ENCODE measurements at regions of chr4 and their contacts with region 1.

Region 1: DNA sequence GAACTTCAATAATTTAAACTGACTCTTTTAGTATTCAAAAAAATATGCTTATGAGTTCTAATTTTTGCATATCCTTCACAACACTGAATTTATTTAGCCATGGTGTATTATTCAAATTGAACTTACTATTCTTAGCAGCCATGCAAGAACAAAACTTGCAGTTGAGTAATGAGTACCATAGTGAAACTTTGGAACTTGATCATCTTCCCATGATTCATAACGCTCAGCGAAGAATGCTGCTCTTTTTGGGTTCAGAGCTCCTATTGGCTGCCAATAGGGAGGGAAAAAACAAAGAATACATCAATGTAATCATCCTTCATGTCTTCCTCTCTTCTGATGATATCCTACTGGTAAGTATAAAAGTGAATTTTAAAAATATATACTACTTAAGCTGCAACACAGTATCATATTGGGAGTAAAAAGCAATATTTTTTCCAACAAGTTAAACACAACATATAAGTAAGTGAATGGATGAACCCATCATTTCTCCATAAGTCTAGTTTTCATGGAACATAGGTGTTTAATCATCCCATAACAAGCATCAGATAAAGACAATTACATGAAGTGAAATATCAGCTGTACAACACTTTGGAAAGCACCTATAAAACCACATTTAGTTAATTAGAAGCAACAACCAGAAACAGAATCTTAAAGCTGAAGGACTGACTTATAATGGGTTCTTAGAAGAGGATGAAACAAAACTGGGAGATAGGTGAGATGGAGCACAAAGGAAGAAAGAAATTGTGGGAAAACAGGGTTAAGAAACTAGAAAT is 145.2 kb upstream of the MAB21L2 start:
- DNase-seq: peak; percentile 42
- ATAC-seq: peak; percentile 98
- H3K4me3 Mint-ChIP-seq: peak overlapping the region; percentile 16
- H3K27ac Mint-ChIP-seq: peak overlapping the region; percentile 59
- H3K4me1 Mint-ChIP-seq: peaks cover 16% of the 10 kb centered on the region
- H3K27me3 Mint-ChIP-seq: no peaks in the 10 kb centered on the region

Region 2: GRCh38 chr4:150297861-150298474 is 138.8 kb before region 1 on chr4:
- CTCF ChIA-PET with region 1: no interaction called
- POLR2A ChIA-PET with region 1: no interaction called
- intact Hi-C with region 1: loop called in 1 of 2 experiments (anchors 2 kb)
- DNase-seq: peak; percentile 60
- ATAC-seq: no peak
- H3K4me3 Mint-ChIP-seq: no peak overlapping the region
- H3K27ac Mint-ChIP-seq: no peak overlapping the region
- H3K4me1 Mint-ChIP-seq: peaks cover 15% of the 10 kb centered on the region
- H3K27me3 Mint-ChIP-seq: no peaks in the 10 kb centered on the region

Region 3: GRCh38 chr4:150395872-150396271 is 40.9 kb before region 1 on chr4:
- CTCF ChIA-PET with region 1: interaction called, 3 read pairs
- POLR2A ChIA-PET with region 1: interaction called, 4 read pairs
- intact Hi-C with region 1: loop called in 1 of 2 experiments (anchors 1 kb)
- DNase-seq: peak; percentile 55
- ATAC-seq: peak; percentile 95
- H3K4me3 Mint-ChIP-seq: no peak overlapping the region
- H3K27ac Mint-ChIP-seq: peak overlapping the region; percentile 84
- H3K4me1 Mint-ChIP-seq: peaks cover 15% of the 10 kb centered on the region
- H3K27me3 Mint-ChIP-seq: no peaks in the 10 kb centered on the region

Measured in activated CD4-positive, alpha-beta T cell treated with anti-CD3 and anti-CD28 coated beads for 36 hours (primary cell).